K562 (cell line): ENCODE measurements at regions of chr9 and their contacts with region 1.

Region 1: DNA sequence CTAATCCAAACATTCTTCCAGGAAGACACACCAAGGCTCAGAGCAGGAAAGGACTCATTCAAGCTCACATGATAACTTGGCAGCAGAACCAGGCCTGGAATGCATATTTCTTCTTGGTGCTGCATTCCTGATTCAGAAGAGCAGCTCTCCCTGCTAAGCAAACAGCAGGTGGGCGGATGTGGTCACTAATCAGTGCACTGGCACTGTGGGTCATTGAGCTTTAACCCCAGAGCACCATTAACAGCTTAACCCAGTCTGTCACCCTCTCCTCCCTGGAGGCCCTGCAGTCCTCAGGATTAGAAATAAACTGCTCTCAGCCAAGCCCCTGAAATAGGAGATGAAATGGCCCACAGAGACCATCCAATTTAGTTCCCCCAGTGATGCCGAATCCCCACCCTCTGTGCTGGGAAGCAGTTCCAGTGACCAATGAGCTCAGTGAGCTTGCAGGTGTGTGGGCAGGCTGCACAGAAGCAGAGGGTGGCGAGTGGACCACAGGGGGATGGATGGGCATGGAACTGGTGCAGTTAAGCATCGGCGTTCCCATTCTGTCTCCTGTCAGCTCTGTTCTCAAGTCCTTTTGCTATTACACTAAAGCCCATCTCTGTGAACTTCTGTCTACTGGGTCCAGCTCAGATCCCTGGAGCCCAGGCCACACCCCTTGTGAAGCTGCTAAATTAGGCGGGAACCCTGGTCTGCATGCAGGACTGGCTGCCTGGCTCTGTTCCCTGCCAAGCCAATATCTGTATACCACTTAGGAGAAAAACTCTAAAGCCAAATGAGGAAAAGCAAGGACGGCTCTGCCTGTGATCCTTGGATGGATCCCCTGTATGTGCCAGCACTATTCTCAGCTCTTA is 16.6 kb upstream of the MEGF9 start:
- DNase-seq: no peak
- ATAC-seq: no peak
- H3K4me3 ChIP-seq: no peak overlapping the region
- H3K27ac ChIP-seq: no peak overlapping the region
- H3K4me1 ChIP-seq: peaks cover 0 to 3% of the 10 kb centered on the region in 2 experiments; a peak in 3 of 5 replicates
- H3K27me3 ChIP-seq: no peaks in the 10 kb centered on the region
- CTCF ChIP-seq: no peak
- EP300 ChIP-seq: no peak
- POLR2A ChIP-seq: no peak
- RAD21 ChIP-seq: no peak

Region 2: GRCh38 chr9:119924742-119925141 is 806.1 kb before region 1 on chr9:
- CTCF ChIA-PET with region 1: no interaction called
- POLR2A ChIA-PET with region 1: no interaction called
- in situ Hi-C with region 1: no loop called
- intact Hi-C with region 1: loop called (anchors 5 kb)
- DNase-seq: no peak
- ATAC-seq: no peak
- H3K4me3 ChIP-seq: no peak overlapping the region
- H3K27ac ChIP-seq: no peak overlapping the region
- H3K4me1 ChIP-seq: no peaks in the 10 kb centered on the region
- H3K27me3 ChIP-seq: no peaks in the 10 kb centered on the region
- CTCF ChIP-seq: no peak
- EP300 ChIP-seq: no peak
- POLR2A ChIP-seq: no peak
- RAD21 ChIP-seq: no peak